ENCODE measurements at regions of chr2 and their contacts with region 1.

Region 1: DNA sequence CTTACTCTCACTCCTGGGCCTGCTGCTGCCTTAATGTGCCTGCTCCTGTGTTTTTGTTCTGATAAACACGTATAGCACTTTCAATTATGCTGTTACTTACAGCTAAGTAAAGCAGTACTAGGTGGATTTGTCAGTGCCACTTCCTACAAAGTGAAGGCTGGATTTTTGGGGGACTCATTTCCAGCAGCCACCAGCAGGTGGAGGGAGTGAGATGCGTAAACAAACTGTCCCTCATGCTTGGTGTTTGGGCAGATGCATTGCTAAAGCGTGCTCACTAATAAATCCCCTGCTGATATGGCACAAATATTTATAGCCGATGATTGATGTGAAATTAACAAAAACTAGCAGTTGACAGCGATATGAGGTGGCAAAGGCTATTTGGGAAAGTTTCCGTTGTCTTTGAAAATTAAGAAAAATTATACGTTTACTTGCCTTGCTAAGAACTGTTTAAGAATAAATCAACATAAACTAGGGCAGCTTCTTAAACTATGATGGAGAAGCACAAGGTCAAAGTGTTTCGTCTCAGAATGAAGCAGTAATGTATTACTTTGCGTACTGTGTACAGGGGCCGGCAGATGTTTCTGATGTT is 101.7 kb downstream of the AGAP1 start:
- DNase-seq: peak; percentile 71 to 89
- H3K4me3 ChIP-seq: no peak overlapping the region
- H3K27ac ChIP-seq: no peak overlapping the region
- H3K4me1 ChIP-seq: peaks cover 6 to 20% (median 15%) of the 10 kb centered on the region in 4 donors
- H3K27me3 ChIP-seq: no peaks in the 10 kb centered on the region
- CTCF ChIP-seq: peak in 5 of 7 experiments; percentile 77 to 85 (median 83)
- EP300 ChIP-seq: no peak
- POLR2A ChIP-seq: no peak

Region 2: GRCh38 chr2:235135990-235136561 is 459.4 kb before region 1 on chr2:
- intact Hi-C with region 1: loop called (anchors 10 kb)
- DNase-seq: peak; percentile 84 to 91
- H3K4me3 ChIP-seq: no peak overlapping the region
- H3K27ac ChIP-seq: no peak overlapping the region
- H3K4me1 ChIP-seq: peaks cover 0 to 4% (median 0%) of the 10 kb centered on the region in 4 donors
- H3K27me3 ChIP-seq: no peaks in the 10 kb centered on the region
- CTCF ChIP-seq: peak in 5 of 7 experiments; percentile 48 to 82 (median 77)
- EP300 ChIP-seq: no peak
- POLR2A ChIP-seq: no peak

Region 3: GRCh38 chr2:235746257-235747084 is 151.0 kb after region 1 on chr2:
- intact Hi-C with region 1: loop called (anchors 5 kb)
- DNase-seq: peak; percentile 72 to 92
- H3K4me3 ChIP-seq: no peak overlapping the region
- H3K27ac ChIP-seq: no peak overlapping the region
- H3K4me1 ChIP-seq: peaks cover 0 to 22% (median 9%) of the 10 kb centered on the region in 4 donors
- H3K27me3 ChIP-seq: no peaks in the 10 kb centered on the region
- CTCF ChIP-seq: peak in 5 of 7 experiments; percentile 64 to 78 (median 78)
- EP300 ChIP-seq: no peak
- POLR2A ChIP-seq: no peak